ENCODE measurements at regions of chr3 and their contacts with region 1.

Region 1: GRCh38 chr3:14203521-14204079 is 25.0 kb downstream of the LSM3 start:
- DNase-seq: peak; percentile 72
- H3K4me3 ChIP-seq: no peak overlapping the region
- H3K27ac ChIP-seq: no peak overlapping the region
- H3K4me1 ChIP-seq: peaks cover 2% of the 10 kb centered on the region
- H3K27me3 ChIP-seq: no peaks in the 10 kb centered on the region
- CTCF ChIP-seq: peak; percentile 80 to 81
- POLR2A ChIP-seq: no peak

Region 2: GRCh38 chr3:14124615-14125190 is 78.9 kb before region 1 on chr3 and contains the starts of genes CHCHD4 and TMEM43:
- CTCF ChIA-PET with region 1: interaction called, 16 read pairs
- POLR2A ChIA-PET with region 1: no interaction called
- dilution Hi-C with region 1: no loop called
- intact Hi-C with region 1: no loop called
- DNase-seq: peak; percentile 99
- H3K4me3 ChIP-seq: peak within 1 kb of the TSS; percentile 66 to 90 (median 67)
- H3K27ac ChIP-seq: peak within 1 kb of the TSS; percentile 61
- H3K4me1 ChIP-seq: peaks cover 22% of the 10 kb centered on the region
- H3K27me3 ChIP-seq: no peaks in the 10 kb centered on the region
- CTCF ChIP-seq: peak in 1 of 2 donors; percentile 1
- POLR2A ChIP-seq: peak; percentile 58
- total RNA-seq, gene CHCHD4: 12.4 and 13.6 TPM in 2 replicates
- total RNA-seq, gene TMEM43: 69.6 and 80.6 TPM in 2 replicates

Region 3: DNA sequence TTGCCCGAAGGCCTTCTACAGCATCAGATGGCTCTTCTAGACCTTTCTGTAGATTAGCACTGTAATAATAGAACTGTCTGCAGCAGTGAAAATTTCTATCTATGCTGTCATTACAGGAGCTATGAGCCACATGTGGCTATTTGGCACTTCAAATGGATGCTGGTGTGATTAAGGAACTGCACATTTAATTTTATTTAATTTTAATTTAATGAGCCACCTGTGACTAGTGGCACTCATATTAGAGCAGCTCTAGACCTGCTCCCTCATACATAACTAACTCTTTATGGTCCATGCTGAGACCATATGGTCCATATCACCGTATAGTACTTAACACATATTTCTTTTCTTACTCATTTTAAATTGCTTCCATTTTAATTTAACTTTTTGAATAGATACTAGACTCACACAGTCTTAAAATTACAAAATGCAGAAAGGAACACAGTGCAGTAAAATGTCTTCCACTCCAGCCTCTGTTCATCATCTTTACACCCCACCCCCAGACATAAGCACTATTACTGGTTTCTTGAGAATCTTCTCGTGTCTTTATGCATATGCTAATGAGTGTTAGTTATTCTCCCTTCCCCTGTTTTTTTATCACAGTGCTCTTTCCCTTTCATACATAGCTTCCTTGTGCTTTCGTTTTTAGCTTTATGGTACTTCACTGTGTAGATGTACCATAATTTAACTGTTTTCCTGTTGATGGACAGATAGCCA is 15.4 kb before region 1 on chr3:
- CTCF ChIA-PET with region 1: interaction called, 18 read pairs
- POLR2A ChIA-PET with region 1: no interaction called
- dilution Hi-C with region 1: no loop called
- intact Hi-C with region 1: no loop called
- DNase-seq: no peak
- H3K4me3 ChIP-seq: no peak overlapping the region
- H3K27ac ChIP-seq: no peak overlapping the region
- H3K4me1 ChIP-seq: no peaks in the 10 kb centered on the region
- H3K27me3 ChIP-seq: no peaks in the 10 kb centered on the region
- CTCF ChIP-seq: no peak
- POLR2A ChIP-seq: no peak

Region 4: GRCh38 chr3:14234251-14235002 is 30.8 kb after region 1 on chr3:
- CTCF ChIA-PET with region 1: interaction called, 27 read pairs
- POLR2A ChIA-PET with region 1: no interaction called
- dilution Hi-C with region 1: no loop called
- intact Hi-C with region 1: no loop called
- DNase-seq: no peak
- H3K4me3 ChIP-seq: no peak overlapping the region
- H3K27ac ChIP-seq: no peak overlapping the region
- H3K4me1 ChIP-seq: peaks cover 10% of the 10 kb centered on the region
- H3K27me3 ChIP-seq: peaks cover 2 to 3% of the 10 kb centered on the region in 2 experiments
- CTCF ChIP-seq: no peak
- POLR2A ChIP-seq: no peak

Region 5: DNA sequence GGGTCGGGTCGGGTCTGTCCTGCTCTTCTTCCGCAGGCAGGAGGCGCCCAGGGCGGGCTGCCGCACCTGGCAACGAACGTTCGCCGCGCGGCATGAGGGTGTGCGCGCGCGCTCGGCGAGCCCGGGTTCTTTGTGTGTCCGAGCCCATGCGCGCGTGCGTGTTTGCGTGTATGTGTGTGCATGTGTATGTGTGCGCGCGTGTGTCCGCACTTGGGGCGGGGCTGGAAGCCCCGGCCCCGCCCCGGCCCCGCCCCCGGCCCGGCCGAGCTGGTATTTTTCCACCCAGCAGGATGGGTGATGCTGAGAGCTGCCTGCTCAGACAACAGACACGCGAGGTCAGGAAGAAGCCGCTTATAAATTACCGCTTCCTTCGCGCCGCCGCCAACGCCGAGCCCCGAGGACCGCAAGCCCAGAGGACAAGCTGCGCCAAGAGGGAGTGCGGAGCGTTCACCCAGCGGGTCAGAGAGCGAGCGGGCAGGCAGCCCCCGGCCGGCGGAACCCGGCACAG is 198.8 kb after region 1 on chr3 and contains the start of gene SLC6A6:
- CTCF ChIA-PET with region 1: interaction called, 8 read pairs
- POLR2A ChIA-PET with region 1: no interaction called
- dilution Hi-C with region 1: no loop called
- intact Hi-C with region 1: loop called (anchors 5 kb)
- DNase-seq: peak; percentile 91
- H3K4me3 ChIP-seq: peak within 1 kb of the TSS; percentile 9 to 90 (median 34)
- H3K27ac ChIP-seq: peak within 1 kb of the TSS; percentile 32
- H3K4me1 ChIP-seq: peaks cover 12% of the 10 kb centered on the region
- H3K27me3 ChIP-seq: no peaks in the 10 kb centered on the region
- CTCF ChIP-seq: peak; percentile 17 to 51
- POLR2A ChIP-seq: peak; percentile 80
- total RNA-seq, gene SLC6A6: 33.8 and 38.0 TPM in 2 replicates

Region 6: GRCh38 chr3:14508961-14509795 is 305.6 kb after region 1 on chr3:
- CTCF ChIA-PET with region 1: interaction called, 10 read pairs
- POLR2A ChIA-PET with region 1: no interaction called
- dilution Hi-C with region 1: no loop called
- intact Hi-C with region 1: no loop called
- DNase-seq: peak; percentile 30
- H3K4me3 ChIP-seq: no peak overlapping the region
- H3K27ac ChIP-seq: no peak overlapping the region
- H3K4me1 ChIP-seq: no peaks in the 10 kb centered on the region
- H3K27me3 ChIP-seq: no peaks in the 10 kb centered on the region
- CTCF ChIP-seq: peak; percentile 66 to 94
- POLR2A ChIP-seq: no peak

Region 7: DNA sequence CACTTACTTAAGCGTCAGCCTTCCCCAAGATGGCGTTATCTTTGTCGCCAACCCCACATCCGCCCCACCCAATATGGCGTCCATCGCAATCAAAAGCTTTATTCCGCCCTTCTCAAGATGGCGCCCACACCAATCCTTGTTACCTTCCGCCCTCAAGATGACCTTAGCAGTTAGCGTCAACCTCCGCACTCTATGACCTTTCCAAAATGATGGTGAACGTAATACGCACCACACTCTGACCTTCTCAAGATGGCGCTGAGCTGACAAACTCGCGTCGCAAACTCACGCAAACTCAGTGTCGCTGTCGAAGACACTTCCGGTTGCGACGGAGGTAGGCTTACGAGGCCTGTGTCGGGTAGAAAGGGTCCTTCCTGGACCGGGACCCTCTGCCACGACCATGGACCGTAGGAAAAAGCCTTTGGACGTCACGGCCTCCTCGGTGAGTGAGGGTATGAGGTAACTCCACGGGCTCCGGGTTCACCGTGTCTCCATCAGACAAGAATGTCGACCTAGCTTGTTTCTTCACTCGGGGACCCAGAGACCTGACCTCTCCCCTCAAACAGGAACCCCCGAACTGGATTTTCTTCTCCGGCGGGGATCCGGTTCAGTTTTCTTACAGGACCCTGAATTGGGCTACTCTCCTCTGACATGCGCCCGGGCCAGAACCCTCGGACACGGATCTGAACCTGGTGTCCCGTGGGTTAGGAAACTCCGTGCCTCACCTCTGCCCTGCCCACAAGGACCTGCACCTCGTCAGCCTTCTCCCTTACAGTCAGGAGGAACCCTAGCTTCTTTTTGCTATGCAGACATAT is 448.0 kb after region 1 on chr3 and contains the start of gene CCDC174:
- CTCF ChIA-PET with region 1: interaction called, 11 read pairs
- POLR2A ChIA-PET with region 1: no interaction called
- dilution Hi-C with region 1: no loop called
- intact Hi-C with region 1: no loop called
- DNase-seq: peak; percentile 99
- H3K4me3 ChIP-seq: peak within 1 kb of the TSS; percentile 17 to 75 (median 61)
- H3K27ac ChIP-seq: peak within 1 kb of the TSS; percentile 40
- H3K4me1 ChIP-seq: peaks cover 16% of the 10 kb centered on the region
- H3K27me3 ChIP-seq: peaks cover 0 to 2% of the 10 kb centered on the region in 2 experiments
- CTCF ChIP-seq: no peak
- POLR2A ChIP-seq: peak; percentile 93
- total RNA-seq, gene CCDC174: 15.1 and 16.6 TPM in 2 replicates

Region 8: GRCh38 chr3:14699643-14700042 is 496.0 kb after region 1 on chr3:
- CTCF ChIA-PET with region 1: no interaction called
- POLR2A ChIA-PET with region 1: no interaction called
- dilution Hi-C with region 1: no loop called
- intact Hi-C with region 1: no loop called
- DNase-seq: no peak
- H3K4me3 ChIP-seq: no peak overlapping the region
- H3K27ac ChIP-seq: no peak overlapping the region
- H3K4me1 ChIP-seq: no peaks in the 10 kb centered on the region
- H3K27me3 ChIP-seq: no peaks in the 10 kb centered on the region
- CTCF ChIP-seq: no peak
- POLR2A ChIP-seq: no peak

Measured in endothelial cell of umbilical vein (primary cell).